ENCODE measurements at regions of chr14 and their contacts with region 1.

Region 1: GRCh38 chr14:72516936-72517700 is 376.8 kb downstream of the DPF3 start:
- DNase-seq: peak; percentile 44 to 57
- ATAC-seq: peak; percentile 55 to 79 (median 74)
- H3K4me3 ChIP-seq: no peak overlapping the region
- H3K27ac ChIP-seq: no peak overlapping the region
- H3K4me1 ChIP-seq: peaks cover 0 to 29% (median 0%) of the 10 kb centered on the region in 9 donors
- H3K27me3 ChIP-seq: no peaks in the 10 kb centered on the region
- CTCF ChIP-seq: peak; percentile 83 to 96 (median 91)

Region 2: DNA sequence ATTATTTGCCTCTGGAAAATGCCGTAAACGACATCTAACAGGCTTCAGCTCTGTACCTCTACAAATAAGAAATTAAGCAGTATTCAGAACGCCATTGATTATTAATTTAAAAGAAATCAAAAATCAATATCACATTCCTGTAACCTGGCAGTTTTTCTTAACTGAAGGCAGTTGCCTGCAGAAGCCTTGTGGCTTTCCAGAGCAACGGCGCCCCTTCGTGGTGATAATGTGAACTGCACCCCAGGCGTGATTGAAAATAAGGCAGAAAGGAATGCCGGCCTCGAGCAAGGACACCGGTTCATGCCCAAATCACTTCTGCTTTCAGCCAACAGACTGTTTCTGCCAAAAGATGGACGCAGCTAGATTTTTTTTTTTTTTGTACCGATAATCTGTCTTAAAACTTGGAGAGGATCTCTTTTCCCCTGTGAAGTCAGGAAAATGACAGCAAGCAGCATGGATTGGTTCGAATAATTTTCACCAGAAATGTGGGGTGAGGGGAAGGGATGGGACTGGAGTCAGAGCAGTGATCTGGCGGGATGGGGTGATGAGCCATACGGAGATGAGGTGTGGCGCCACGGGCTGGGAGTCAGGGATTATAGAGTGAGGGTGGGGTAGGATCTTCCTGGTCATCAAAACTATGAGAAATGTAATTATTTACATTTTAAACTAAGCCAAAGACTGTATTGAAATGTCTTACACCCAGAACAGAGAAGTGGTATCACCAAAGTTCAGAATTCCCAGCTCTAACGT is 96.2 kb before region 1 on chr14:
- intact Hi-C with region 1: no loop called
- DNase-seq: peak; percentile 67 to 72
- ATAC-seq: peak in 3 of 8 donors; percentile 57 to 69 (median 57)
- H3K4me3 ChIP-seq: no peak overlapping the region
- H3K27ac ChIP-seq: no peak overlapping the region
- H3K4me1 ChIP-seq: peaks cover 0 to 3% (median 0%) of the 10 kb centered on the region in 9 donors
- H3K27me3 ChIP-seq: no peaks in the 10 kb centered on the region
- CTCF ChIP-seq: peak; percentile 76 to 96 (median 92)

Region 3: GRCh38 chr14:72736314-72736715 is 219.2 kb after region 1 on chr14:
- intact Hi-C with region 1: loop called in 1 of 10 experiments (anchors 10 kb)
- DNase-seq: no peak
- ATAC-seq: peak in 4 of 8 donors; percentile 18 to 56 (median 34)
- H3K4me3 ChIP-seq: no peak overlapping the region
- H3K27ac ChIP-seq: no peak overlapping the region
- H3K4me1 ChIP-seq: peaks cover 0 to 37% (median 3%) of the 10 kb centered on the region in 9 donors
- H3K27me3 ChIP-seq: no peaks in the 10 kb centered on the region
- CTCF ChIP-seq: peak in 3 of 9 donors; percentile 7 to 35 (median 17)

Region 4: GRCh38 chr14:72948481-72949138 is 431.5 kb after region 1 on chr14:
- intact Hi-C with region 1: loop called in 9 of 10 experiments (anchors 2 to 10 kb)
- DNase-seq: peak; percentile 58 to 62
- ATAC-seq: peak in 3 of 8 donors; percentile 53 to 60 (median 53)
- H3K4me3 ChIP-seq: no peak overlapping the region
- H3K27ac ChIP-seq: no peak overlapping the region
- H3K4me1 ChIP-seq: no peaks in the 10 kb centered on the region
- H3K27me3 ChIP-seq: no peaks in the 10 kb centered on the region
- CTCF ChIP-seq: peak; percentile 75 to 92 (median 88)

Measured in heart right ventricle (tissue), 16 donors.